AG04449 (cell line): ENCODE measurements at regions of chr17 and their contacts with region 1.

Region 1: DNA sequence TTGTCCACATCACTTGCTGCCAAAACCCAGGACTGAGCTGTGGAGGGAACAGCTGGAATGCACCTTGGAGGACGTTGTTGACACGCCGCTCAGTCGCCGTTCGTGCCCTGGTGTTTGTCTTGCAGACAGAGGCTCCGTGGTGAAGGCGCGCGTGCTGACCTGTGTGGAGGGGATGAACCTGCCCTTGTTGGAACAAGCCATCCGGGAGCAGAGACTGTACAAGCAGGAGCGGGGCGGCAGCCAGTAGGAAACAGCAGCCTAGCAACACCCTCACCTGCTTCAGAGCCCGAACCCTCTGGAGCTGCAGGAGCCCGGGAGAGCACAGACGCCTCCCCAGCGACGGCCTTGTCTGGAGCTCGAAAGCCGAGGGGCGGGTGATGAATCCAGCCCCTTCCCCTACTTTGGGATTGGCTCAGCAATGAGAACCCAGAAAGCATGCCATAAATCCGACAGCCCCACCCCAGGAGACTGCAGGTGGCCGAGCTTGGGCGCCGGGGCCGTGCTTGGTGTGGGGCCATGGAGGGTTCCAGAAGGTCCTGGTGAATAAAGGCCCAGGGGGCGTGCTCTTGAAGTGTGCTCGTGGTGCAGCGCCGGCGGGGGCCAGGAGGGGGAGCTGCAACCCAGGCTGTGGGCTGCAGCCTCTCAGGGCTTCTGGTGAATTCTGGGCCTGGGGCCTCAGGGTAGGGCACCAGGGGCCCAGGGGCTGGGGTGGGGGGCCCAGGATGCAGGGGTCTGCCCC is 470 bp upstream of the CDK3 start:
- DNase-seq: no peak
- H3K4me3 ChIP-seq: no peak overlapping the region
- CTCF ChIP-seq: peak; percentile 84

Region 2: DNA sequence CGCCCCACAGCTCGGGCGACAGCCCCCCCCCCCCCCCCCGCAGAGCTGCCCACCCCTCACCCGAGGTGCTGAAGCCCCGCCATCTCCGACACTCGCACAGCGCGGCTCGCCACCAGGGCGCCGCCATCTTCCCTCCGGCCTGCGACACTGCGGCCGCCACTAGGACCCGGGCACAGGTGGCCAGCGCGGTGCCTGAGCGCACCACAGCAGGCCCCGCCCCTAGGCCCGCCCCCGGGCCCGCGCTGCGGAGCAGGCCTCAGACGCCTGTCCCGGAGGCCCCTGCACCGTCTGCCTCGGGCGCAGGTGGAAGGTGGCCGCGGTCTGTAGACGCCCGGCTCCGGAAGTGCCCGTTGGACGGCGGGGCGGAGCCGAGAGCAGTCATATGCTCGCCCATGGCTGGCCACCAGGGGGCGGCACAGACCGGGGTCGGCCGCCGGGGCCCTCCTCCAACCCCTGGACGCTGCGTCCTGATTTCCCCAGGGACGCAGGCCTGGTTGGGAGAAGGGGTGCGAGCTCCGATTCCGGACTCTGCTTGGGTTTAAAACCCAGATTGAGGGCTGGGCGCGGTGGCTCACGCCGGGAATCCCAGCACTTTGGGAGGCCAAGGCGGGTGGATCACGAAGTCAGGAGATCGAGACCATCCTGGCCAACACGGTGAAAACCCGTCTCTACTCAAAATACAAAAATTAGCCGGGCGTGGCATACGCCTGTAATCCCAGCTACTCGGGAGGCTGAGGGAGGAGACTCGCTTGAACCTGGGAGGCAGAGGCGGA is 95.2 kb before region 1 on chr17 and contains the start of gene MRPL38:
- CTCF ChIA-PET with region 1: interaction called, 276 read pairs
- POLR2A ChIA-PET with region 1: no interaction called
- DNase-seq: peak; percentile 40
- H3K4me3 ChIP-seq: peak within 1 kb of the TSS; percentile 75
- CTCF ChIP-seq: peak; percentile 95

Region 3: GRCh38 chr17:75979705-75980187 is 20.4 kb before region 1 on chr17:
- CTCF ChIA-PET with region 1: interaction called, 13 read pairs
- POLR2A ChIA-PET with region 1: interaction called, 4 read pairs
- DNase-seq: no peak
- H3K4me3 ChIP-seq: peak overlapping the region; percentile 89
- CTCF ChIP-seq: no peak

Region 4: DNA sequence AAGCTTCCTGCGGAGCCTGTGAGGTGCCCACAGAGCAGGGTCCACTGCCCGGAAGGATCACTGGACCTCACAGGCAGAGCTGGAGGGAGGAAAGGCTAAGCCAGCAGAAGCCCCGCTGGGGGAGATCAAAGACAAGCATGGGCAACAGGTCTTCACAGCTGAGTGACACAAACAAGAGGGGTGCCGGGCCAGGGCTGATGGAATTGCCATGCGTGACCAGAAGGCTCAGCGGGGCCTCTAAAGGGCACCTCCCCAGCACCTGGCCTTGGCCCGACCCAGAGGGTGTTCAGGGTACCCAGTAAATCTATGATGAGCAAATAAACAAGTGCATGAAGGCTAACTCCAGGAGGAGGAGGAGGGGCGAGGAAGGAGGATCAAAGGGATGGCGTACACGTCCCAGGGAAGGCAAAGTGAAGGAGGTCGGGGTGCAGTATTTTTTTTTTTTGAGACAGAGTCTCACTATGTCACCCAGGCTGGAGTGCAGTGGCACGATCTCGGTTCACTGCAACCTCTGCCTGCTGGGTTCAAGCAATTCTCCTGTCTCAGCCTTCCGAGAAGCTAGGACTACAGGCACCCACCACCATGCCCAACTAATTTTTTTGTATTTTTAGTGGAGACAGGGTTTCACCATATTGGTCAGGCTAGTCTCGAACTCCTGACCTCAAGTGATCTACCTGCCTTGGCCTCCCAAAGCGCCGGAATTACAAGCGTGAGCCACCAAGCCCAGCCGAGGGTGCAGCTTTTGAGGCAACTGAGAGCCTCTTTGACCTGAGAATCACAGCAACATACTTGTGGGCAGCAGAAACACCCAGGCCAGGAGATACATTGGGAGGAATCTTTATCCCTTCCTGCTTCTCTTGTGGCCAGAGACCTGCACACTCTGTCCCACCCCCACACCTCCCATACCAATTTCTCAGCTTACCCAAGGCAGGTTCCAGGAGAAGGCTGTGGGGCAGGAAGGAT is 119.5 kb after region 1 on chr17:
- CTCF ChIA-PET with region 1: no interaction called
- POLR2A ChIA-PET with region 1: no interaction called
- DNase-seq: no peak
- H3K4me3 ChIP-seq: no peak overlapping the region
- CTCF ChIP-seq: no peak